ENCODE measurements at regions of chr12 and their contacts with region 1.

Region 1: DNA sequence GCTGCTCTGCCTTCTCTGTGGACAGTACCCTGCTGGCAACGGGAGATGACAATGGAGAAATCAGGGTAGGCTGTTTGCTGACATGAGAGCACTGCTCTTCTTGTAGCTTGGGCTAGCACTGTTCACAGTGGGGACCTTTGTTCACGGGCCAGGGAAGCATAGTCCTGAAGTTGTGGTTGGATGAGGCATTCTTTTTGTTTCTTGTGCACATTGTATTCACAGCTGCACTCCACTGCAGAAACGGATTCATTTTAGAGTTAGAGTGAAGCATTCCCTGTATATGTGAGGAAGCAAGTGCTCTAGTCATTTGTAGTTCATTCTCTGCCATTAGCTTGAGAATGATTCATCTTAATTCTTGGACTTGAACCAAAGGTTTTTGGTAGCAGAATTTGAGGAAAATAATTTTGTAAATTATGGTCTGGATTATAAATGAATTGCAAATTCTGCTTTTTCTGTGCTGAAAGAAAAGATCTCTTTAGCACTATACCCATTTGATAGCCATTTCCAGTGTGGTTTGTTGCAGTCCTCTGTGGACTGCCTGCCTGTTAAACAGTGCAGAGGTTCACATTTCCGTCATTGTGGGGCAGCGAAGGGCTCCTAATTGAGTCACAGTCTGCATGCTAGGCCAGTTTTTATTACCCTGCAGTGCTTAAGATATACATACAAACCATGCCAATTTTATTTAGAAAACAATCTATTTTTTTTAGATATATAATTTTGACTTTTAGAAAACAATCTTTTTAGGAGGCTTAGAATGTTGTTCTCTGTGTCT is 80.6 kb downstream of the APAF1 start:
- DNase-seq: peak; percentile 81
- ATAC-seq: peak; percentile 98
- H3K4me3 Mint-ChIP-seq: no peak overlapping the region
- H3K27ac Mint-ChIP-seq: no peak overlapping the region
- H3K4me1 Mint-ChIP-seq: peaks cover 2% of the 10 kb centered on the region
- H3K27me3 Mint-ChIP-seq: no peaks in the 10 kb centered on the region
- CTCF ChIP-seq: peak; percentile 69

Region 2: GRCh38 chr12:98743347-98743953 is 17.8 kb after region 1 on chr12:
- CTCF ChIA-PET with region 1: interaction called, 12 read pairs
- POLR2A ChIA-PET with region 1: interaction called, 4 read pairs
- intact Hi-C with region 1: no loop called
- DNase-seq: peak; percentile 68
- ATAC-seq: peak; percentile 35
- H3K4me3 Mint-ChIP-seq: no peak overlapping the region
- H3K27ac Mint-ChIP-seq: no peak overlapping the region
- H3K4me1 Mint-ChIP-seq: peaks cover 29% of the 10 kb centered on the region
- H3K27me3 Mint-ChIP-seq: peaks cover 30% of the 10 kb centered on the region
- CTCF ChIP-seq: peak; percentile 70

Region 3: GRCh38 chr12:98754095-98754494 is 28.4 kb after region 1 on chr12:
- CTCF ChIA-PET with region 1: no interaction called
- POLR2A ChIA-PET with region 1: no interaction called
- intact Hi-C with region 1: no loop called
- DNase-seq: peak; percentile 57
- ATAC-seq: peak; percentile 93
- H3K4me3 Mint-ChIP-seq: no peak overlapping the region
- H3K27ac Mint-ChIP-seq: peak overlapping the region; percentile 49
- H3K4me1 Mint-ChIP-seq: peaks cover 3% of the 10 kb centered on the region
- H3K27me3 Mint-ChIP-seq: peaks cover 3% of the 10 kb centered on the region
- CTCF ChIP-seq: no peak

Measured in activated CD8-positive, alpha-beta T cell treated with anti-CD3 and anti-CD28 coated beads for 36 hours (primary cell).